ENCODE measurements at regions of chr15 and their contacts with region 1.

Region 1: GRCh38 chr15:97903971-97904572 is 56.4 kb upstream of the ARRDC4 start:
- DNase-seq: peak; percentile 58 to 87 (median 73)
- ATAC-seq: peak; percentile 97
- H3K4me3 ChIP-seq: no peak overlapping the region
- H3K27ac ChIP-seq: no peak overlapping the region
- H3K4me1 ChIP-seq: no peaks in the 10 kb centered on the region
- H3K27me3 ChIP-seq: peaks cover 12 to 60% of the 10 kb centered on the region in 2 donors
- CTCF ChIP-seq: peak; percentile 17 to 54

Region 2: DNA sequence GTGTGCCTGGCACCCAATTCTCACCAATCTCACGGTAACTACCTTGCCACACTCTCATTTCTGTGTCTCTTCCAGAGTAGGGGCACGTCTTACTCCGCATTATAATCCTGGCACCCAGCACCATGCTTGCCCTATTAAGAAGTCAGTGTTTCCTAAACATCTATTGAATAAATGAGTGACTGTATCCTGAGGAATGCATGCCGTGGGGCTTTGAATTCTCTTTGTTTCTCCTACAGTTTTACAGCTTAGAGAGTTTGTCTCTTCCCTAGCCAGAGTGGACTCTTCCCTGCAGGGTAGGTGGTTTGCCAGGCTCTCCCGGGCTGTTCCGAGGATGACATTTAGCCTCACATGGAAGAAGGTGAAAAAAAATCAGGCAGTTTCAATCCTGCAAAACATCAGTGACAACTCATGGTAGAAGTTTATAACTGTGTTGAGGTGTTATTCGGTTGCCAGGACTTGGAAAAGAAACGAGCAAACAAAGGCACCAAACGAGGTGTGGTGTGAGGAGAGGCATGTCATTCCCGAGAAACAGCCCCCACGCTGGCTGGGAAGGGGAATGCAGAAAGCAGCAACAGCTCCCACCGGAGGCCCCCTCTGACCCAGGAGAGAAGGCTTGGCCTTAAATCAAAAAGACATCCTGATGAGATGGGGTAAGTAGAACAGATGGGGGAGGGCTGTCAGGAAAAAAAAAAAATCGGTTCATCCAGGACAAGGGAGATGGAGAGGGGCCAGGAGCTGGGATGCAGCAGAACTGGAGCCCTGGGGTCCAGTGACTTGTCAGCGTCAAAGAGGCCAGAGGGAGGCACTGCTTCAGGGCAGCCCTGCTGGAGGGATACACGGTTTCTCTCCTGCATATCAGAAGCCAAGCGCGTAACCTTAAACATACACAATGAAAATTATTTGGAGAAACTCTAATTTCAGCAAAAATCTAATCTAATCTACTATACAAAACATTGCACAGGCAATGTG is 112.0 kb before region 1 on chr15:
- intact Hi-C with region 1: no loop called
- DNase-seq: peak in 3 of 4 donors; percentile 24 to 34 (median 26)
- ATAC-seq: no peak
- H3K4me3 ChIP-seq: no peak overlapping the region
- H3K27ac ChIP-seq: no peak overlapping the region
- H3K4me1 ChIP-seq: no peaks in the 10 kb centered on the region
- H3K27me3 ChIP-seq: no peaks in the 10 kb centered on the region
- CTCF ChIP-seq: no peak

Region 3: DNA sequence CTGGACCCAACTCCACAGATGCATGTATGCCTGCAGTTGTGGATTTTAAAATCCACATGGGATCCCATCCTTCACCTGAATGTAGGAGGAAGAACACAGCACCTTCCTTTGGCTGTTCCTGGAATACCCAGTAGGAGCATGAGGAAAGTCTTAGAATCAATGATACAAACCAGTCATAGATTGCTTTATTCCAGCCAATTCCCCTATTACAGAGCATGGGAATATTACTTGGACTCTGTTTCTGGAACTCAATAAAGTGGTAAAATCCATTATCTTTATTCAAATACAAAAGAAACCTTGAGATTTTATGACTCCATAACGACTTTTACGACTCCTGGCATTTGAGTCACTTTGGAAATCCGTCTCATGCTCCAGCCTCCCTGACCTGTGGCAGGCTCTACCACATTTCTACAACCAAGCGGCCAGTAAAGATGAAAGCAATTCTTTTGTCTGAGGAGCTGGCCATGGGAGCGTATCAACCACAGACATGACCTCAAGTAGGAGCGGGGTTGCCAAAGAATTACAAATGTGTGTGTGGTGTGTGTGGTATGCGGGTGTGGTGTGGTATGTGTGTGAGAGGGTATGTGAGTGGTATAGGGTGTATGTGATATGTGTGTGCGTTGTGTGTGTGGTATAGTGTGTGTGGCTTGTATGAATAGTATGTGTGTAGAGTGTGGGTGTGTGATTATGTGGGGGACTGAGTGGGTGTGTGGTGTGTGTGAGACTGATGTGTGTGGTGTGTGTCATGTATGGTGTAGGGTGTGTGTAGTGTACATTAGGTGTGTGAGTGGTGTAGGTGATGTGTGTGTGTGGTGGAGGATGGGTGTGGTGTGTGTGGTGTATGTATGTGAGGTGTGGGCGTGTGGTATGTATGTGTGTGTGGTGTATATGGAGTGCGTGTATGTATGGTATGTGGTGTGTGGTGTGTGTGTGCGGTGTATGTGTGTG is 96.5 kb after region 1 on chr15:
- intact Hi-C with region 1: no loop called
- DNase-seq: no peak
- ATAC-seq: no peak
- H3K4me3 ChIP-seq: no peak overlapping the region
- H3K27ac ChIP-seq: no peak overlapping the region
- H3K4me1 ChIP-seq: no peaks in the 10 kb centered on the region
- H3K27me3 ChIP-seq: no peaks in the 10 kb centered on the region
- CTCF ChIP-seq: no peak

Region 4: GRCh38 chr15:98177924-98178592 is 274.0 kb after region 1 on chr15:
- intact Hi-C with region 1: loop called in 1 of 2 experiments (anchors 5 kb)
- DNase-seq: peak in 2 of 4 donors; percentile 59 to 70
- ATAC-seq: peak; percentile 91
- H3K4me3 ChIP-seq: no peak overlapping the region
- H3K27ac ChIP-seq: no peak overlapping the region
- H3K4me1 ChIP-seq: no peaks in the 10 kb centered on the region
- H3K27me3 ChIP-seq: peaks cover 0 to 54% of the 10 kb centered on the region in 2 donors
- CTCF ChIP-seq: peak; percentile 39 to 55